Breast epithelium (tissue), 4 donors: ENCODE measurements at regions of chr5 and their contacts with region 1.

Region 1: GRCh38 chr5:59123682-59124081 is 540.8 kb downstream of the RAB3C start:
- DNase-seq: no peak
- H3K4me3 ChIP-seq: no peak overlapping the region
- H3K27ac ChIP-seq: no peak overlapping the region
- H3K4me1 ChIP-seq: no peaks in the 10 kb centered on the region
- H3K27me3 ChIP-seq: no peaks in the 10 kb centered on the region
- CTCF ChIP-seq: no peak
- POLR2A ChIP-seq: no peak

Region 2: DNA sequence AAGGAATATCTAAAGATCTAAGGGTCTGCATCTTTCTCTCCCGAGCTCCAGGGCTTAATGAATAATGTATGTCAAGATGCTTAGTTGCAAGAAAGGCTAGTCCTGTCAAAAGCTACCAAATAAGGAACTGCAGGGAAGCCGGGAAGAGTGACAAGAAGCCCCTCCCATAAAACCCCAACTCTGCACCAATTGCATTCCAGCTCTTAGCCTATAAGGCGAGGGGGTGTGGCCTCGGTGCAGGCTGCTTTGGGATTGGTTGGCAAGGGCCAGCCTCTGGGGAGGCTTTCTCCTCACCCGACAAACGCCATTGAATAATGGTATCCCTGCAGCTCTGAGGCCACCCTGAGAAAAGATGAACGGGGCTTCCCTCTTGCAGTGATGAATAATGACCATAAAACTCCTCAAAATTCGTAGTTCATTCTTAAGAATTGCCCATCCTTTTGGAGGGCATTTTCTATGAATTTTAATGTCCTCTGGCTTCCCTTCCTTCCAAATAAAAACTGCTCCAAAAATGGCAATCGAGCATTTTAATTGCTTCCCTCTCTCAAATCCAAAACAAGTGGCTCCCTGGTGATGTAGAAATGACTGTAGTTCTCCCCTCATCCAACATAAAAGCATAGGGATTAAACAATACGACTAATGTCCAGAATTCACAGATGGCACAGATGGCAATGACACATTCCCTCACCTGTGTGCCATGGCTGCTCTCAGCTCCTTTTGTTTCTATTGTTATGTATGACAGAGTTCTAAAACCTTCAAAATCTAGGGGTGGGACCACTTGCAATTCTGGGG is 123.7 kb before region 1 on chr5:
- intact Hi-C with region 1: no loop called
- DNase-seq: no peak
- H3K4me3 ChIP-seq: no peak overlapping the region
- H3K27ac ChIP-seq: no peak overlapping the region
- H3K4me1 ChIP-seq: no peaks in the 10 kb centered on the region
- H3K27me3 ChIP-seq: no peaks in the 10 kb centered on the region
- CTCF ChIP-seq: no peak
- POLR2A ChIP-seq: no peak

Region 3: GRCh38 chr5:59055745-59056448 is 67.8 kb before region 1 on chr5:
- intact Hi-C with region 1: loop called (anchors 2 kb)
- DNase-seq: no peak
- H3K4me3 ChIP-seq: no peak overlapping the region
- H3K27ac ChIP-seq: no peak overlapping the region
- H3K4me1 ChIP-seq: no peaks in the 10 kb centered on the region
- H3K27me3 ChIP-seq: no peaks in the 10 kb centered on the region
- CTCF ChIP-seq: no peak
- POLR2A ChIP-seq: no peak